Natural killer cell (primary cell): ENCODE measurements at regions of chr2 and their contacts with region 1.

Region 1: GRCh38 chr2:26376799-26377198 is 24.9 kb upstream of the DRC1 start:
- DNase-seq: no peak
- ATAC-seq: no peak
- H3K4me3 ChIP-seq: no peak overlapping the region
- H3K4me3 Mint-ChIP-seq: no peak overlapping the region
- H3K27ac ChIP-seq: no peak overlapping the region
- H3K27ac Mint-ChIP-seq: no peak overlapping the region
- H3K4me1 ChIP-seq: no peaks in the 10 kb centered on the region
- H3K4me1 Mint-ChIP-seq: peaks cover 0 to 20% of the 10 kb centered on the region in 2 donors
- H3K27me3 ChIP-seq: no peaks in the 10 kb centered on the region
- H3K27me3 Mint-ChIP-seq: no peaks in the 10 kb centered on the region
- CTCF ChIP-seq: no peak

Region 2: DNA sequence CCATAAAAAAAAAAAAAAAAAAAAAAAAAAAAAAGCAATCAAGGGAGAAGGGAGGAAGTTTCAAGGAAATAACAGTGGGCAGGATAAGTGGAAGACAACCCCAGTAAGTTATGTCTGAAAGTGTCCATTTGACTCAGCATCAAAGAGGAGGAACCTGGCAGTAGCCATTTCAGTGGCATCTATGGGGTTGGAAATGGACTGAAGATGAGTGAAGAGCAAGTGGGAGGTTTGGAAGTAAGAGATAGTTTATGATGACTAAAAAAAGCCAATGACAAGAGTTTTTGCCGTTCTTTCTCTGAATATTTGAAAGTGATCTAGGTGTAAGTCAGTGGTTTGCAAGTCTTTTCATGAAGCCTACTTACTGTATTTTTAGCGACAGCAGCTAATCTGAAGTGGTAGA is 40.1 kb before region 1 on chr2:
- intact Hi-C with region 1: loop called (anchors 1 kb)
- DNase-seq: no peak
- ATAC-seq: no peak
- H3K4me3 ChIP-seq: no peak overlapping the region
- H3K4me3 Mint-ChIP-seq: no peak overlapping the region
- H3K27ac ChIP-seq: no peak overlapping the region
- H3K27ac Mint-ChIP-seq: no peak overlapping the region
- H3K4me1 ChIP-seq: no peaks in the 10 kb centered on the region
- H3K4me1 Mint-ChIP-seq: no peaks in the 10 kb centered on the region
- H3K27me3 ChIP-seq: no peaks in the 10 kb centered on the region
- H3K27me3 Mint-ChIP-seq: no peaks in the 10 kb centered on the region
- CTCF ChIP-seq: no peak

Region 3: DNA sequence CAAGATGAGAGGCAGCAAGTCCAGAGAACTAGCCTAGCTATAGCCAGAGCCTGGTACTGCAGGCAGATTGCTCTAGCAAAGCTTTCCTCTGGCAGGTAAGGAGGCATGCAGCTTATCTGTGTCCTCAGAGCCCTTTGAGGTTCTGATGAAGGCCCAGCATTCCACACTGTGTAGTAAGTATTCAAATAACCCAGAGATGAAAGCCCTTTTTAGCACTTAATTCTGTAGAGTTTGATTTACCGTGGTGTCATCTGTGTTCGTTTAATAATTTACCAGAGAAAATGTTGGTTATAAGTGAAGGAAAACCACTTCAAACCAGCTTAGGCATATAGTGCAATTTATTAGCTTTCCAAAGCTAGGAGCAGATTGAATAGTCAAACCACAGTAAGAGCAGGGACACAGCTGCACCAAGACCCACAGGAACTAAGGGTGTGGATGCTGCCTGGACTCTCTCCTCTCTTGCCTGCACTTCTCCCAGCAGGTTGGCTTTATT is 1740.4 kb after region 1 on chr2:
- intact Hi-C with region 1: no loop called
- DNase-seq: no peak
- ATAC-seq: no peak
- H3K4me3 ChIP-seq: no peak overlapping the region
- H3K4me3 Mint-ChIP-seq: no peak overlapping the region
- H3K27ac ChIP-seq: no peak overlapping the region
- H3K27ac Mint-ChIP-seq: no peak overlapping the region
- H3K4me1 ChIP-seq: no peaks in the 10 kb centered on the region
- H3K4me1 Mint-ChIP-seq: peaks cover 21 to 24% of the 10 kb centered on the region in 2 donors
- H3K27me3 ChIP-seq: no peaks in the 10 kb centered on the region
- H3K27me3 Mint-ChIP-seq: no peaks in the 10 kb centered on the region
- CTCF ChIP-seq: no peak